Activated CD4-positive, alpha-beta memory T cell treated with anti-CD3 and anti-CD28 coated beads for 36 hours (primary cell): ENCODE measurements at regions of chr6 and their contacts with region 1.

Region 1: DNA sequence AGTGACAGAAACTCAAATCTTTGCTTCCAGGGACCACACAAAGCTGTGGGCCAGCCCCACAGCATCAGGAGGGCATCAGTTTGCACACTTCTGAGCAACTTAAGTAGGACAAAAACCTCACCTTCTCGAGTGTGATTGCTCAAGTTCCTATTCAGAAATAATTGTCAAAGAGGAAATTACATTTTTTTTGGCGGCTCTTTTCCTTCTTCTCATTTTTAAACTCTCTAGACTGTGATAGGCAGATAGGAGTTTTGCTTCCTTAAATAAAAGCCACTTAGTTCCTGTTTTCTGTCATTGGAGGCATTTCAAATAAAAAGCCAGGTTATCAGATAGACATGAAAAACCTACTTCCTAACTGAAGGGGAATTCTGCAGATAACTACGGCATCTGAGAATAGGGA is 11.2 kb upstream of the TAGAP start:
- DNase-seq: no peak
- H3K4me3 Mint-ChIP-seq: no peak overlapping the region
- H3K27ac Mint-ChIP-seq: peak overlapping the region; percentile 53
- H3K4me1 Mint-ChIP-seq: peaks cover 73% of the 10 kb centered on the region
- H3K27me3 Mint-ChIP-seq: no peaks in the 10 kb centered on the region

Region 2: GRCh38 chr6:159017757-159018559 is 38.0 kb before region 1 on chr6:
- CTCF ChIA-PET with region 1: interaction called, 4 read pairs
- POLR2A ChIA-PET with region 1: interaction called, 5 read pairs
- intact Hi-C with region 1: loop called (anchors 1 kb)
- DNase-seq: no peak
- H3K4me3 Mint-ChIP-seq: no peak overlapping the region
- H3K27ac Mint-ChIP-seq: peak overlapping the region; percentile 79
- H3K4me1 Mint-ChIP-seq: peaks cover 55% of the 10 kb centered on the region
- H3K27me3 Mint-ChIP-seq: no peaks in the 10 kb centered on the region

Region 3: DNA sequence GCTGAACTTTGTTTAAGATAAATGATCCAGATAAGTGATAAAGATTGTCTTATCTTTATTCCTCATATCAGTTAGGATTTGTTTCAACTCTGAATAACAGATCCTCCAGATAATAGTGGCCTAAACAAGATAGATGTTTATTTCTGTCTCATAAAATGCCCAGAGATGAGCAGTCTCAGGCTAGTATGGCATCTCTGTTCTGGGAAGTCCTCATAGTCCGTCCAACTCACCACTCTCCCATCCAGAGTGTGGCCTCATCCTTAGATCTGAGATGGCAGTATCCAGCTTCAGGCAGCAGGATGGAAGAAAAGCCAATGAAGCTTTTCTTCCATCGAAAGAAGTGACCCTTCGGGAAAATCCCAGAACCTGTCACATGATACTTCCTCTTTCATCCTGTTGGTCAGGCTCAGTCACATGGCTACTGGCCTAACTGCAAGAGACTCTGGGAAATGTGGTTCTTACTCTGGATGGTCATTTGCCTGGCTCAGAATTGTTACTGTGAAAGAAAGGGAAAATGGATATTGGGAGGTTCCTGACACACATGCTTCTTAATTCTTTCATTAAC is 18.2 kb after region 1 on chr6:
- CTCF ChIA-PET with region 1: no interaction called
- POLR2A ChIA-PET with region 1: no interaction called
- intact Hi-C with region 1: no loop called
- DNase-seq: no peak
- H3K4me3 Mint-ChIP-seq: no peak overlapping the region
- H3K27ac Mint-ChIP-seq: no peak overlapping the region
- H3K4me1 Mint-ChIP-seq: peaks cover 46% of the 10 kb centered on the region
- H3K27me3 Mint-ChIP-seq: peaks cover 2% of the 10 kb centered on the region

Region 4: DNA sequence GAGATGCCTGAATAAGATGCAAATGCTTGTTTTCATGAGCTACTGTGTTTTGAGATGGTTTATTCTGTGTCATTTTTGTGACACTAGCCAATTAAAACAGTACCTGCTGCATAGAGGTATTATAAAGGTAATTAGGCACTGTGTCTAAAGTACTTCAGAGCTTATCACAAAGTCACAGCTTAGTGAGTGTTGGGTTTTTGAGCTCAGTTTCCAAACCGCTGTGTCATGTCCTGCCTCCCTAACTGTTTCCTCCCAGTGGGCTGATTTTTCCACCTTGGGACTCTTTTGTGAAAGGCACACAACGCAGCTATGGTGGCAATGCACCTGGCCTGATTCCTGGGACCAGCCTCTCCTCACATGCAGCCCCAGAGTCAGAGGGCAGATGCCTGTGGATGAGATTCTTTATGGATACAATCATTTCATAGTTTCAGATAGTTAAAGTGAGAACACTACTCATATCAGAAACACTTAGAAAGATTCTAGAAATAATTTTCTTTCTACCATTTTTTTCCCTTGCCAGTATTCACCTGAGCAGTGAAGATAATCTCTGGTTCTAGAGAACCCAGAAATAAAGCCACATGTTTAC is 30.1 kb after region 1 on chr6:
- CTCF ChIA-PET with region 1: no interaction called
- POLR2A ChIA-PET with region 1: interaction called, 3 read pairs
- intact Hi-C with region 1: loop called (anchors 1 kb)
- DNase-seq: no peak
- H3K4me3 Mint-ChIP-seq: no peak overlapping the region
- H3K27ac Mint-ChIP-seq: no peak overlapping the region
- H3K4me1 Mint-ChIP-seq: peaks cover 38% of the 10 kb centered on the region
- H3K27me3 Mint-ChIP-seq: no peaks in the 10 kb centered on the region

Region 5: GRCh38 chr6:159098636-159099106 is 42.7 kb after region 1 on chr6:
- CTCF ChIA-PET with region 1: interaction called, 12 read pairs
- POLR2A ChIA-PET with region 1: interaction called, 3 read pairs
- intact Hi-C with region 1: loop called (anchors 1 kb)
- DNase-seq: peak; percentile 83
- H3K4me3 Mint-ChIP-seq: peak overlapping the region; percentile 63
- H3K27ac Mint-ChIP-seq: peak overlapping the region; percentile 87
- H3K4me1 Mint-ChIP-seq: peaks cover 79% of the 10 kb centered on the region
- H3K27me3 Mint-ChIP-seq: no peaks in the 10 kb centered on the region